ENCODE measurements at regions of chr5 and their contacts with region 1.

Region 1: GRCh38 chr5:13957032-13957645 is 12.7 kb upstream of the DNAH5 start:
- DNase-seq: peak; percentile 68
- H3K4me3 Mint-ChIP-seq: no peak overlapping the region
- H3K27ac Mint-ChIP-seq: no peak overlapping the region
- H3K4me1 Mint-ChIP-seq: no peaks in the 10 kb centered on the region
- H3K27me3 Mint-ChIP-seq: no peaks in the 10 kb centered on the region
- CTCF ChIP-seq: peak; percentile 74

Region 2: GRCh38 chr5:12292610-12293204 is 1664.4 kb before region 1 on chr5:
- CTCF ChIA-PET with region 1: interaction called, 4 read pairs
- POLR2A ChIA-PET with region 1: no interaction called
- intact Hi-C with region 1: loop called (anchors 10 kb)
- DNase-seq: peak; percentile 50
- H3K4me3 Mint-ChIP-seq: no peak overlapping the region
- H3K27ac Mint-ChIP-seq: no peak overlapping the region
- H3K4me1 Mint-ChIP-seq: no peaks in the 10 kb centered on the region
- H3K27me3 Mint-ChIP-seq: no peaks in the 10 kb centered on the region
- CTCF ChIP-seq: no peak

Region 3: GRCh38 chr5:13218518-13218917 is 738.6 kb before region 1 on chr5:
- CTCF ChIA-PET with region 1: no interaction called
- POLR2A ChIA-PET with region 1: no interaction called
- intact Hi-C with region 1: loop called (anchors 5 kb)
- DNase-seq: peak; percentile 38
- H3K4me3 Mint-ChIP-seq: no peak overlapping the region
- H3K27ac Mint-ChIP-seq: no peak overlapping the region
- H3K4me1 Mint-ChIP-seq: no peaks in the 10 kb centered on the region
- H3K27me3 Mint-ChIP-seq: no peaks in the 10 kb centered on the region
- CTCF ChIP-seq: peak; percentile 31

Region 4: GRCh38 chr5:13946115-13946514 is 11.0 kb before region 1 on chr5:
- CTCF ChIA-PET with region 1: interaction called, 10 read pairs
- POLR2A ChIA-PET with region 1: no interaction called
- intact Hi-C with region 1: no loop called
- DNase-seq: peak; percentile 46
- H3K4me3 Mint-ChIP-seq: no peak overlapping the region
- H3K27ac Mint-ChIP-seq: no peak overlapping the region
- H3K4me1 Mint-ChIP-seq: no peaks in the 10 kb centered on the region
- H3K27me3 Mint-ChIP-seq: no peaks in the 10 kb centered on the region
- CTCF ChIP-seq: no peak